Posterior cingulate gyrus (tissue), 11 donors: ENCODE measurements at regions of chr11 and their contacts with region 1.

Region 1: GRCh38 chr11:35491231-35491871 is 34.1 kb downstream of the PAMR1 start:
- DNase-seq: no peak

Region 2: GRCh38 chr11:35427071-35427470 is 64.3 kb before region 1 on chr11:
- intact Hi-C with region 1: loop called (anchors 2 kb)
- DNase-seq: peak in 3 of 10 donors; percentile 19 to 71 (median 39)

Region 3: GRCh38 chr11:35549787-35550186 is 58.4 kb after region 1 on chr11:
- intact Hi-C with region 1: loop called (anchors 10 kb)
- DNase-seq: no peak

Region 4: DNA sequence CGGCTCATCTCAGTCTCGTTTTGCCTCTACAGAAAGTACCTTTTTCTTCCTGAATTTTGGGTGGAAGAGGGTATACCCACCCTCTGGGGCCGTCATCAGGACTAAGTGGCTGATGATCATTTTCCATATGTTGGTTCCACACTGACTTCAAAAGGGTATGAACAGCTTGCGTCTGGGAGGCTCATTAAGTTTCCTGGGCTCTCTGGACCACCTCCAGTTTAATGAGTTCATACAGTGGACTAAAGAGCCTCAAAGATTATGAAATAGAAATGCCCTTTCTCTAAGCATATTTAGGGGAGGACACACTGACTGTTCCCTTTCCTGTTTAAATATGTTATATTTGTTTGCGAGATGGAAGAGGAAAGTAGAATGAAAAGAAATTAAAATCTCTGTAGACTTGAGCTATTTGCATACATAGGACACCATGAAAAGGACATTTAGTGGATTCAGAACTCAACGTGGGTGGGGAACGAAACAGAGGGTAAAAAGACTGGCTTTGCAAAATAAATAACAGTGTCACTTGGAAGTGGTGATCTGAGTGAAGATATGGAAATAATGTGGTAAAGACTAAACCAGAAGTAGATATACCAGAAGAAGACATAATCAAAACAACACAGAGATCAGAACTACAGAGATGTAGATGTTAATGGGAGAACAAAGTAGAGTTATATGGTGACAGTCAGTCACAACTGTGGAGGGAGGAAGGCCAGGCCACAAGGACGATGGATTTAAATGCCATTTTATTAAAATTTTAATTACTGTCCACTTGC is 471.2 kb after region 1 on chr11:
- intact Hi-C with region 1: no loop called
- DNase-seq: no peak